ENCODE measurements at regions of chr9 and their contacts with region 1.

Region 1: DNA sequence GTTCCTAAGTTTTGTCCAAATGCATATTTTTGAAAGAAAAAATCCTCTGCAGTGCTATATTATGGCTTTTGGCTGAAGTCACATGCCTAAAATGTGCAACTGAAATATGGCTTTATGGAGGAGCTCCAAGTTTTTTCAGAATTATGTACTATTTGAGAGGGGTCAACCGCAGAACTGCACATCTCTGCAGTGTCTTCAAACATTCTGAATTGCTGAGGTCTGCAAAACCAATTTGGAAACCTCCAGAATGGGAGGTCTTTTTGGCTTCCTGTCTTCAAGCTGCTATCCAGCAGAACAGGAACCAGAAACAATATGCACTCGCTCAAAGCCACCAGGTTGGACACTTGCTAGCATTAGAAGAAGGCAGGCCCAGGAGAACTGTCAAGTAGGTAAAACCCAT is 376.0 kb upstream of the PAPPA start:
- DNase-seq: no peak
- H3K4me3 ChIP-seq: no peak overlapping the region
- H3K27ac ChIP-seq: no peak overlapping the region
- H3K4me1 ChIP-seq: no peaks in the 10 kb centered on the region
- H3K27me3 ChIP-seq: no peaks in the 10 kb centered on the region
- CTCF ChIP-seq: no peak
- EP300 ChIP-seq: no peak
- POLR2A ChIP-seq: no peak

Region 2: GRCh38 chr9:115456515-115456914 is 321.1 kb before region 1 on chr9:
- intact Hi-C with region 1: loop called in 1 of 4 experiments (anchors 5 kb)
- DNase-seq: no peak
- H3K4me3 ChIP-seq: no peak overlapping the region
- H3K27ac ChIP-seq: no peak overlapping the region
- H3K4me1 ChIP-seq: no peaks in the 10 kb centered on the region
- H3K27me3 ChIP-seq: no peaks in the 10 kb centered on the region
- CTCF ChIP-seq: no peak
- EP300 ChIP-seq: no peak
- POLR2A ChIP-seq: no peak